ENCODE measurements at regions of chr17 and their contacts with region 1.

Region 1: DNA sequence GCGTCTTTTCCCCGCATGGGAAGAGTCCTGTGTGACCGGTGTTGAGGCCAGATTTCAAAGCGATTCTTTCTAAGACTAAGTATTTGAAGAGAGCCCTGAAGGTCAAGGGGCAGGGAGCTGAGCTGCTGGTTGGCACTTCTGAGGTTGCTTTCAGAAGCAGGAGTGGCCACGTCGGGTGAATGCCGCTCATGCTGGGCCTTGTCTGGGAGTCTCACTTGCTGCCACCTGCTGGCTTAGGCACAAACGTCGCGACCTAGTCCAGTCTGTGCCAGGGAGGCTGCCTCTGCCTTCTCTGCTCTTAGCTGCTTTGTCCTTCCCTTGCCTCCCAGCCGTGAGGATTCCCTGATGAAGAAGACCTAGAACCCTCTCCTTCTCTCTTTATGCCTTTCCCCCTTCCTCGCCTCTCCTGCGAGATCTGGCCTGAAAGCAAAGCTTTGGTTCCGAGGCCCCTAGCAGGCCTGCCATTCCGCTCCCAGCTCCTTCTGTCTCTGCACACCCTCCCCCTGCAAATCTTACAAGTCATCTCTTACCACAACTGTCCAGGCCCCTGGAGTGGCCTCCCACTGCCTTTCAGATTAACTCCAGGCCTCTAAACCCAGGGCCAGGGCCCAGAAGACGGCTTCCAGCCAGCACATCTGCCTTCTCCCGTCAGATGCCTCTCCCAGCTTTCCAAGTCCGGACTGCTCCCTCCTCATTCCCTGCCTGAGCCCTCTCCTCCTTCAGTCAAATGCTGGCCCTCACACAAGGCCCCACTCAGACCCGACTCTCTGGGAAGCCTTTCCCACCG is 11.4 kb downstream of the CTNS start:
- DNase-seq: no peak
- H3K4me3 ChIP-seq: no peak overlapping the region
- CTCF ChIP-seq: peak; percentile 77

Region 2: DNA sequence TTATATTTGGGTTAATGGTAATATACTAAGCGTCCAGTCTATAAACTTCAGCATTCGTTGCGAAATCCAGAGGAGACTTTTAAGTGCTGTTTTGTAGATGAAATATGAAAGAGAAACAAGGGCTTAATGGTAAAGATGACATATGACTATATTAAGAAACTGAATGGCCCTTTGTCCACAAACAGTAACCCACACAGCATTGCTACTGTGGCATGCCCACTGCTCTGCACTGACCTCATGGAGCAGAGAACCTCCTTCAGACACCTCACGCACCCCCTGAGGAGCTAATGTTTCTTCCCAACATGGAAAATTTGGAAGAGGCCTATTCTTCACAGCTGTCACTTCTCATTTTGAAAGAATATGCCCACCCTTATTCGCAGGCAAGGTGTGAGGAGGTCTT is 145.5 kb before region 1 on chr17:
- CTCF ChIA-PET with region 1: no interaction called
- POLR2A ChIA-PET with region 1: no interaction called
- DNase-seq: no peak
- H3K4me3 ChIP-seq: no peak overlapping the region
- CTCF ChIP-seq: no peak

Region 3: DNA sequence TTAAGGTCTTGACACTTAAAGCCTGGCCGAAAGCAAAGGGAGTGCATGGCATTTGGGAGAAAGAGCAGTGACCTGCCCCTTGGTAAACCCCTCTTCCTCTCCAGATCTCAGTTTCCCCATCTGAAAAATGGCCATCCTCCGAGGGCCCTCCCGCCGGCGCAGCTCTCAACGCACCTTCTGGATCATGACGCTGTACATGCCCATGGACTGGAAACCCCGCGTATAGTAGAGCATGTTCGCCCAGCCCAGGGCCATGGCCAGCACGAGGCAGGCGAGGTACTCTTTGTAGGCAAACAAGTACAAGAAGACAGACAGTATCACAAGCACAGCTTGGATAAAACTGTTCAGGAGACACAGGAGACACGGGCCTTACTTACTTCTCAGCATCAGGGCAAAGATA is 123.9 kb before region 1 on chr17:
- CTCF ChIA-PET with region 1: no interaction called
- POLR2A ChIA-PET with region 1: no interaction called
- DNase-seq: no peak
- H3K4me3 ChIP-seq: no peak overlapping the region
- CTCF ChIP-seq: no peak

Region 4: GRCh38 chr17:3535253-3535995 is 112.5 kb before region 1 on chr17:
- CTCF ChIA-PET with region 1: interaction called, 13 read pairs
- POLR2A ChIA-PET with region 1: no interaction called
- DNase-seq: no peak
- H3K4me3 ChIP-seq: peak overlapping the region; percentile 53
- CTCF ChIP-seq: peak; percentile 80

Region 5: GRCh38 chr17:3594051-3594800 is 53.7 kb before region 1 on chr17:
- CTCF ChIA-PET with region 1: no interaction called
- POLR2A ChIA-PET with region 1: no interaction called
- DNase-seq: no peak
- H3K4me3 ChIP-seq: no peak overlapping the region
- CTCF ChIP-seq: no peak

Region 6: DNA sequence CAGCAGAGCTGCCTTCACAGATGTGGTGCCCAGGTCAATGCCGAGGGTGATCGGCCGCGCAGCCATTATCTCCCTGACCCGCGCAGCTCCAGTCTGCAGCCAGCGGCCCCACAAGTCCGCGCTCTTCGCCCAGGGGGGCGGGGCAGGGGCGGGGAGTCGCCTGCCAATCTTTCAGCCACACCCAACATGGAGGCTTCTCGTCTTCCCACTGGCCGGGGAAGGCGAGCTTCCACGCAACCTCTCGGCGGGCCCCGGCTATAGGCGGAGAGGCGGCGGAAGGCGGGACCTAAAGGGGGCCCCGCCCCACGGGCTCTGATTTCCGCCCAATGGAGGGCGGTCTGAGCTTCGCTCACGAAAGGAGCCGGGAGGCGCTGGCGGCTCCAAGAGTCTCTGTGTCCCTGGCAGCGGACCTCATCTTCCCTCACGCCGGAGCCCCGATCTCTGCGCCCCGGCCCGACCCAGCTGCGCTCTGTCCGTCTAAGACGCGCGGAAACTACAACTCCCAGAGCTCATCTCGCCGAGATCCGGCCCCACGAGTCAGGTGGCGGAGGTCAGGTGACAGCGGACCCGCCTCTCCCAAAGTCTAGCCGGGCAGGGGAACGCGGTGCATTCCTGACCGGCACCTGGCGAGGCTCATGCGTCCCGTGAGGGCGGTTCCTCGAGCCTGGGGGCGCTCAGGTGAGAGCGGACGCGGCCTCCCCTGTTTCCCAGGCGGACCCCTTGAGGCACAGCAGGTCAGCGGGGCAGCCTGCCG is 11.6 kb before region 1 on chr17 and contains the starts of genes CTNS and SHPK:
- CTCF ChIA-PET with region 1: interaction called, 40 read pairs
- POLR2A ChIA-PET with region 1: interaction called, 8 read pairs
- DNase-seq: peak; percentile 70
- H3K4me3 ChIP-seq: peak within 1 kb of the TSS; percentile 89
- CTCF ChIP-seq: no peak

Region 7: GRCh38 chr17:3852561-3852960 is 204.6 kb after region 1 on chr17:
- CTCF ChIA-PET with region 1: no interaction called
- POLR2A ChIA-PET with region 1: no interaction called
- DNase-seq: no peak
- H3K4me3 ChIP-seq: no peak overlapping the region
- CTCF ChIP-seq: no peak

Measured in AG04449 (cell line).